ENCODE measurements at regions of chr2 and their contacts with region 1.

Region 1: GRCh38 chr2:191051825-191052778 is 38.1 kb upstream of the STAT1 start:
- DNase-seq: no peak
- H3K4me3 ChIP-seq: no peak overlapping the region
- H3K27ac ChIP-seq: no peak overlapping the region
- H3K27me3 ChIP-seq: no peaks in the 10 kb centered on the region
- CTCF ChIP-seq: peak; percentile 69

Region 2: GRCh38 chr2:190979906-190980629 is 72.0 kb before region 1 on chr2:
- CTCF ChIA-PET with region 1: no interaction called
- POLR2A ChIA-PET with region 1: no interaction called
- DNase-seq: peak; percentile 88
- H3K4me3 ChIP-seq: peak overlapping the region; percentile 8
- H3K27ac ChIP-seq: peak overlapping the region; percentile 49
- H3K27me3 ChIP-seq: no peaks in the 10 kb centered on the region
- CTCF ChIP-seq: no peak

Region 3: DNA sequence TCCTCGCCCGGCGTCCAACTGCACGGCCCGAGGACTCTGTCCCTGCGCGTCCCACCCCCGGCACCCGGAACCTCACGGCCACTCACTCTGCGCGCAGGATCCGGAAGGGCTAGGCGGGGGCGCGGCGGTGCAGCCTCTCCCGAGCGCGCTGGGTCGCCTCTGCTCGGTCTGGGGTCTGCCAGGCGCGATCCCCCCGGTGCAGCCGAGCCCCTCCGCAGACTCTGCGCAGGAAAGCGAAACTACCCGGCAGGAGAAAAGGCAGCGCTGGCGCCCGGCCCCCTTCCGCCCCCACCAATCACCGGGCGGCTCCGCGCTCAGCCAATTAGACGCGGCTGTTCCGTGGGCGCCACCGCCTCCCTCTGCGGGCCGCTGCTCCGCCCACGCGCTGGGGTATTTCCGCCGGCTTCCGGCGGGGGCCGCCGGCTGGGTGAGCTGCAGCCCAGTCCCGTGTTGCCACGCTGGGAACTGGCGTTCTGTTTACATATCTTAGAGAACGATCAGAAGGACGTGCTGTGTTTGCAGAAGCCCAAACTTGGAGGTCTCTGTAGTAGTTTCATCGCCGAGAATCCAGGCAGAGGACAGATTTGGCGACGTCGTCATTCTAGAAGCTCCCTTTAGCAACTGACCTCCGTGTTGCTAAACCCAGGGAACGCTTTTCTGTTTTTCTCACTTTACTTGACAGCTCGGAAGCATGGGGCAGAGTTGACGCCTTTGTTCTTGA is 38.0 kb before region 1 on chr2 and contains the start of gene STAT1:
- CTCF ChIA-PET with region 1: interaction called, 7 read pairs
- POLR2A ChIA-PET with region 1: interaction called, 18 read pairs
- DNase-seq: peak; percentile 89
- H3K4me3 ChIP-seq: peak within 1 kb of the TSS; percentile 89
- H3K27ac ChIP-seq: peak within 1 kb of the TSS; percentile 98
- H3K27me3 ChIP-seq: no peaks in the 10 kb centered on the region
- CTCF ChIP-seq: no peak
- polyA plus RNA-seq, gene STAT1: 109 and 130 TPM in 2 replicates

Region 4: DNA sequence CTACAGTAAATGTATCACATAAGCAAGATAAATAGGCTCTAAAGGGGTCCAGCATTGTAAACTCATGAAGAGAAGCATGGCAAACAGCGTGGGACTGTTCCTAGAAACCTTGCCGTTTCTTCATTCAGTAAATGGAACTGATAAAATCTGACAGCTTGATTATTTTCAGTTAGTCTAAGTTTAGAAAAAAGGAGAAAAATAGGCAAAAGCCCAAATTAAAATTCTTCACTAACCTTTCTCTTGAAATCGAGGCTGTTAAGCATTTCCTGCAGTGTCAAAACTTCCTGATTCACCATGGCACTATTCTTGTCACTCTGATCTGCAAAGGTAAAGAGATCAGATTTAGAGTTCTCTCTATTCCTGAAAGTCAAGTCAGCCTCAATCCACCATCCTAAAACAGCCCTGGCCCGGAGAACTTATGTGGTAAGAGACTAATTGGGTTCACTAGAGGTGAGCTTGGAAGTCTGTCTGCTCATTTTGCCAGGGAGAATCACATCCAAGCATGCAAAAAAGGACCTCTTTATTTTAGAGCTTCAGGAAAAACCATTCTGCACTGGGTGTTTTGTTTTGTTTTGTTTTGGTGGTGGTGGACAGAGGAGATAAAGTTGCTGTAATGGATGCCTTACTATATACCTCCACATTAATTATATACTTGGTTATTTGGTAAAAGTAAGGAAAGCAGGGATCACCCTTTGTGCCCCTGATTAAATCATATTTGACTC is 14.3 kb after region 1 on chr2:
- CTCF ChIA-PET with region 1: interaction called, 29 read pairs
- POLR2A ChIA-PET with region 1: no interaction called
- DNase-seq: no peak
- H3K4me3 ChIP-seq: no peak overlapping the region
- H3K27ac ChIP-seq: no peak overlapping the region
- H3K27me3 ChIP-seq: no peaks in the 10 kb centered on the region
- CTCF ChIP-seq: no peak

Region 5: GRCh38 chr2:191158193-191158592 is 106.1 kb after region 1 on chr2:
- CTCF ChIA-PET with region 1: interaction called, 251 read pairs
- POLR2A ChIA-PET with region 1: interaction called, 4 read pairs
- DNase-seq: no peak
- H3K4me3 ChIP-seq: no peak overlapping the region
- H3K27ac ChIP-seq: no peak overlapping the region
- H3K27me3 ChIP-seq: no peaks in the 10 kb centered on the region
- CTCF ChIP-seq: no peak

Region 6: GRCh38 chr2:191508738-191509137 is 456.6 kb after region 1 on chr2:
- CTCF ChIA-PET with region 1: interaction called, 13 read pairs
- POLR2A ChIA-PET with region 1: interaction called, 5 read pairs
- DNase-seq: no peak
- H3K4me3 ChIP-seq: no peak overlapping the region
- H3K27ac ChIP-seq: no peak overlapping the region
- H3K27me3 ChIP-seq: no peaks in the 10 kb centered on the region
- CTCF ChIP-seq: no peak

Region 7: DNA sequence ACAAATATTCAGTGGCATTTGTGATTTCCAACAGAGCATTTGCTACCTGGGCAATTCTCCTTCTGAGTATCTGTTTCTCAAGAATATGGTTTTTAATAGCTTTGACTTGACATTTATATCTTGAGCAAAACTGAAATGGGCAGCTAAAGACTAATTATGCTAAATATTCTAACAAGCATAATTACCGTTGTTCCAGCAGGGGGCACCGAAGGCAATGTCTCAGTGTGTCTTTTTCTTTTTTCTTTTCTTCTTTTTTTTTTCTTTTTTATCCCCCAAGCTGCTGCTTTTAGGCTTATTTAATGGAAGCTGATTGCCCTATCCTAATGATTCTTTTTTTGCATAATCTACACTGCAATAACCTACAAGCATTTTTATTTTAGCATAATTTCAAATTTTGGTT is 487.0 kb after region 1 on chr2:
- CTCF ChIA-PET with region 1: interaction called, 13 read pairs
- POLR2A ChIA-PET with region 1: no interaction called
- DNase-seq: no peak
- H3K4me3 ChIP-seq: no peak overlapping the region
- H3K27ac ChIP-seq: no peak overlapping the region
- H3K27me3 ChIP-seq: peaks cover 4% of the 10 kb centered on the region
- CTCF ChIP-seq: peak; percentile 76